Lower leg skin (tissue), 4 donors: ENCODE measurements at regions of chr2 and their contacts with region 1.

Region 1: DNA sequence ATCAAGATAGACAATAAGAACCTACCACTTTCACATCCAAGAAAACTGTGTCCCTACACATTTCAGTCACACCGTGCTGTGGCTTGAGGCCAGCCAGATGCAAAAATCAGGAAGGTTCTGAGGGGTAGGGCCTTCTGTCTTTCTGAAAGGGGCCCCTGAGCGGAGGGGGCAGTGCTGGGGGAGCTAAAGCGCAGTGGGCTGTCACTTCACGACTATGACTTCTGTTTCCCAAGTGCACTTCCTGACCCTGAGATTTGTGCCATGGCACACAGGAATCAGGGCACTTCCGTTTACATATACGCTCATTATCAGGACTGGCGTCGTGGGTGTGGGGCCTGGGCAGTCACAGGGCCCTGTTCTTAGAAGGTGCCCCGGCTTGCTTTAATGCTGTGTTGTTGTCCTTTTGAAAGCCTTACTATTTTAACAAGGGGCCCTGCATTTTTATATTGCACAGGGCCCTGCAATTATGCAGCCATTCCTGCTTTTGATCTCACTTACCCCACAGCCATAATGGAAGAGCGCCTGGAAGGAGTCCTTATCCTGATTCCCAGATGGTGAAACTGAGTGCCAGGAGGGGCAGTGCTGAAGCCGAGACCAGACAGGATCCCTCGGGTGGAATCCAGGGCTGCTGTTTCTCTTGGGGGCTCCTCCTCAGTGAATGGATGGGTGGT is 620 bp downstream of the NGEF start:
- DNase-seq: peak in 1 of 2 donors; percentile 73
- H3K4me3 ChIP-seq: no peak overlapping the region
- CTCF ChIP-seq: no peak
- POLR2A ChIP-seq: no peak

Region 2: GRCh38 chr2:232795920-232796319 is 216.5 kb before region 1 on chr2:
- intact Hi-C with region 1: no loop called
- DNase-seq: no peak
- H3K4me3 ChIP-seq: no peak overlapping the region
- CTCF ChIP-seq: no peak
- POLR2A ChIP-seq: no peak

Region 3: DNA sequence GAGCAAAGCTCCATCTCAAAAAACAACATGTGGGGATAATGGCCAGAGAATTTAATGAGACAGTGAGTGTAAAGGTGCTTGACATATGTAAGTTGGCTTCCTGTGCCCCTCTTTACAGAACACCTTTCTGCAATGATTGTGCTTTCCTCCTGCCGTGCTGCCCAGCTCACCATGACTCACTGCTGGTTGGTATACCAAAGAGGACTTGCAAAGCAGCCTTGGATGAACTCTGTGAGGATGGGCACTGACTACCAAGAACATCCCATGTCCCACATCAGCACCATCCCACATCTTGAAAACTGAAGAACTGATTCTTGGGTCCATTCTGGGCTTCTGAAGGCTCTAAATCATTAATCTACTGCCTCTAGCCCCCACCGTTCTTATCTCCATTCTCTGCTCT is 51.6 kb before region 1 on chr2:
- intact Hi-C with region 1: loop called (anchors 1 kb)
- DNase-seq: no peak
- H3K4me3 ChIP-seq: no peak overlapping the region
- CTCF ChIP-seq: no peak
- POLR2A ChIP-seq: no peak